ENCODE measurements at regions of chr6 and their contacts with region 1.

Region 1: DNA sequence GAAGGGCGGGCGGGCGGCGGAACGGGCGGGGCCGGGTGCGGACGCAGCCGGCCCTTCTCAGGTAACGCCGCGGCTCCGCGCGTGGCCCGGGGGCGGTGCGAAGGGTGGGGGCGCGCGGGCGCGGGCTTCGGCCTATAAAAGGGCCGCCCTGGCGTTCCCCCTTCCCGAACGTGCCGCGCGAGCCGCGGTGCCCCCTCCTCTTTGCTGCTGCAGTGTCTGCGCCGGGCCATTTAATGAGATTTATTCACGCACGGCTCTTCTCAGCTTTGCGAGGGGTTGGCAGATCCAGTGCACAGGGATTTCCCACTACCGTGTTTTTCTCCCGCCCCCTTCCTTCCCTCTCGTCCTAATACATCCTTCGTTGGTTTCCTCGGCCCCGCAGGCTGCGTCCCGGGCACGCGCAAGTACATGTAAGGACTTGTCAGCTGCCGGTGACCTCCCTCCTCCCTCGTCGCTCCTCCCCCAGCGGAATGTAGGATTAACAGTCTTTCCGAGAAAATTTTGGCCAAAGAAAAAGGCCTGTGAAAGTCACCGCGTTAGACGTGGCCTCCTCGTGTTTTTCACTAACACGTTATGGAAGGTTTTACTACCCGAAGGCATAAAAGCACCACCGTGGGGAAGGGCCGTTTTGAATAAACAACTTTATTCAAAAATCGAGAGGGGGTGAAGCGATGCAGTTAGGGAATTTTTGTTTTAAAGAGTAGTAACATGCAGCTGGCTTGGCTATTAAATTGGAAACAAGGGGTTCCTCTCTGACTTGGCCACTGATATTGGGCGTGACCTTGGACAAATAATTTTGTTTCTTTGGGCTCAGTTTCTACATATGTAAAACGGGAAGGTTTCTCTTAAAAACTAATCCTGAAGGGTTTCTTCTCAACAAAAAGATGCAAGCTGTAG is 966 bp upstream of the REV3L start:
- DNase-seq: peak; percentile 89
- ATAC-seq: peak; percentile 70
- H3K4me3 Mint-ChIP-seq: peak overlapping the region; percentile 99
- H3K27ac Mint-ChIP-seq: peak overlapping the region; percentile 99
- H3K4me1 Mint-ChIP-seq: peaks cover 53% of the 10 kb centered on the region
- H3K27me3 Mint-ChIP-seq: no peaks in the 10 kb centered on the region

Region 2: GRCh38 chr6:111441678-111442243 is 42.2 kb before region 1 on chr6:
- CTCF ChIA-PET with region 1: no interaction called
- POLR2A ChIA-PET with region 1: no interaction called
- DNase-seq: no peak
- ATAC-seq: no peak
- H3K4me3 Mint-ChIP-seq: no peak overlapping the region
- H3K27ac Mint-ChIP-seq: no peak overlapping the region
- H3K4me1 Mint-ChIP-seq: peaks cover 10% of the 10 kb centered on the region
- H3K27me3 Mint-ChIP-seq: no peaks in the 10 kb centered on the region

Region 3: DNA sequence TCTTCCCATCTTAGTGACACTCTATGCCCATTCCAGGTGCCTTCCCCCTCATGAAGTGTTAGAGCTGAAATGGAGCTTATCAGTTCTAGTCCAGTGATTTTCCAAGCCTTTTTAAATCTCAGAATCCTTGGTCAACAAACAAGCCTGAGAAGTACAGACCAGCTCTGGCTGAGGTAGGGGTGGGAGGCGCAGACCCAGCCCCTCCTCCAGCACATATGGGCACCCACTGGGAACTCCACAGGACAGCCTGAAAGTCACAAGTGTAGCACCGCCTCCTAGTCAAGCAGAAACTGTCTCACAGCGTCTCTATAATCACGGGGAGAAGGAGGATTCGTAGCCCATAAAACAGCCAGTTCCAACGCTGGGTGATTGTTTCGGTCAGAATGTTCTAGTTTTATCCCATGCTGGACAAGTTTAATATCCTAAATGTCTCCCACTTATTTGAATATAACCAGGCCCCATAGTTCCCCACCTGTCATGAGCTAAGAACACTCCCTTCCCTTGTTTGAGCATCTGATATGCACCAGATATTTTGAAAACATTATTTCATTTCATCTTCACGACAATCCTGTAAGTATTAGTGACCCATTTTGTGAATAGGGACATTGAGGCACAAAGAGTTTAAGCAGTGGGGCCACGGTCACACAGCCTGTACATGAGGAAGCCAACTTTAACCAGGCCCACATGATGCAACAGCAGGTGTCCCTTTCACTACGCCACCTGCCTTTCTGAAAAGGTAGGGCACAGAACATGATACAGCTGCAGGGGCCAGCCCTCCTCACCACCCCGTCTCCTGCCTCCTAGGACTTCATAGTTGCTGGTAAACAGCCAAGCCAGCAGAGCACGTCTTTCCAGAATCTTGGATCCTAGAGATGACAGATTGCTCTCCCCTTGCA is 81.6 kb after region 1 on chr6:
- CTCF ChIA-PET with region 1: interaction called, 12 read pairs
- POLR2A ChIA-PET with region 1: interaction called, 13 read pairs
- DNase-seq: peak; percentile 49
- ATAC-seq: peak; percentile 47
- H3K4me3 Mint-ChIP-seq: no peak overlapping the region
- H3K27ac Mint-ChIP-seq: peak overlapping the region; percentile 88
- H3K4me1 Mint-ChIP-seq: peaks cover 48% of the 10 kb centered on the region
- H3K27me3 Mint-ChIP-seq: no peaks in the 10 kb centered on the region

Region 4: GRCh38 chr6:111605100-111605751 is 121.2 kb after region 1 on chr6:
- CTCF ChIA-PET with region 1: interaction called, 18 read pairs
- POLR2A ChIA-PET with region 1: interaction called, 34 read pairs
- DNase-seq: peak; percentile 49
- ATAC-seq: peak; percentile 56
- H3K4me3 Mint-ChIP-seq: peak overlapping the region; percentile 82
- H3K27ac Mint-ChIP-seq: peak overlapping the region; percentile 88
- H3K4me1 Mint-ChIP-seq: peaks cover 47% of the 10 kb centered on the region
- H3K27me3 Mint-ChIP-seq: no peaks in the 10 kb centered on the region

Region 5: DNA sequence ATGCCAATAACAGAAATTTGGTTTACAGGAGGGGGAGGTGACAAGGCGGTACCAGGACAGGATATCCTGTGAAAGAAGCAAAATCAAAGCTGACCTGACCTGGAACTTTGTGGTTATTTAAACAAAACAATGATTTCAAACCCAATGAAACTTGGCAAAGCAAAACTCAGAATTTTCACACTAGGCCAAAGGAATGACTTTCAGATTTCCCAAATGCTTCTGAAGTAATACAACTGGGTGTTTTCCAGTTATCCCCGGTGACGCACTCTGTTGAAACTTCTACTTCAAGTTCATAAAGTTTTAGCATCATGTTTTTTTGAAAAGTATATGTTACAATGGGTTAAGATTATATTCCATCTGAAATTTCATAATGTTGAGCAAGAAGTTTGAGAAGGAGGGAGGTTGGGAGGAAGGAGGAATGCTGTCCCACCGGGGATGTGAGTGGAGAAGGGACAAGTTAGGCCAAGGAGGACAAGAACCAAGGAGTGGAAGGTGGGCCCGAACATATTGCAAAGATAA is 199.8 kb after region 1 on chr6:
- CTCF ChIA-PET with region 1: no interaction called
- POLR2A ChIA-PET with region 1: no interaction called
- DNase-seq: no peak
- ATAC-seq: no peak
- H3K4me3 Mint-ChIP-seq: no peak overlapping the region
- H3K27ac Mint-ChIP-seq: peak overlapping the region; percentile 53
- H3K4me1 Mint-ChIP-seq: peaks cover 21% of the 10 kb centered on the region
- H3K27me3 Mint-ChIP-seq: no peaks in the 10 kb centered on the region

Measured in activated CD8-positive, alpha-beta T cell treated with anti-CD3 and anti-CD28 coated beads, Interleukin-2, amount 10 ng/mL, durations not matched to agents 7 days and 5 days (primary cell).